AG04450 (cell line): ENCODE measurements at regions of chr4 and their contacts with region 1.

Region 1: GRCh38 chr4:123701131-123701575 is 304.6 kb downstream of the SPRY1 start:
- DNase-seq: no peak
- H3K4me3 ChIP-seq: no peak overlapping the region
- H3K27ac ChIP-seq: no peak overlapping the region
- H3K27me3 ChIP-seq: no peaks in the 10 kb centered on the region
- CTCF ChIP-seq: no peak

Region 2: DNA sequence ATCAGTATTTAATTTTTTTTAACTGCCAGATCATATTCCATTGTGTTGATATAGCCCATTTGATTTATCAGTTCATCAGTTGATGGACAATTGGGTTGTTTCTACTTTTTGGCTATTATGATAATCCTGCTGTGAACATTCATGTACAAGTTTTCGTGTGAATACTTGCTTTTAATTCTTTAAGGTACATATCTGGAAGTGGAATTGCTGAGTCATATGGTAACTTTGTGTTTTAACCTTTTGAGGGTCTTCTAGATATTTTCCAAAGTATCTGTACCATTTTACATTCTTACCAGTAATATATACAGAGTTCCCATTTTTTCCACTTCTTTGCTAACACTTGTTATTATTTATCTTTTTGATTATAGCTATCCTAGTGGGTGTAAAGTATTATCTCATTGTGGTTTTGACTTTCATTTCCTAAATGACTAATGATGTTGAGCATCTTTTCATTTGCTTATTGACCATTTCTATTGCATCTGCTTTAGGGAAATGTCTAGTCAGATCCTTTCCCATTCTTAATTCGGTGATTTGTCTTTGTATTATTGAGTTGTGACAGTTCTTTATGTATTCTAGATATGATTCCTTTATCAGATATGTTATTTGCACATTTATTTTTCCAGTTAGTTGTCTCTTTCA is 703.6 kb before region 1 on chr4:
- CTCF ChIA-PET with region 1: no interaction called
- POLR2A ChIA-PET with region 1: no interaction called
- DNase-seq: no peak
- H3K4me3 ChIP-seq: no peak overlapping the region
- H3K27ac ChIP-seq: no peak overlapping the region
- H3K27me3 ChIP-seq: no peaks in the 10 kb centered on the region
- CTCF ChIP-seq: no peak

Region 3: DNA sequence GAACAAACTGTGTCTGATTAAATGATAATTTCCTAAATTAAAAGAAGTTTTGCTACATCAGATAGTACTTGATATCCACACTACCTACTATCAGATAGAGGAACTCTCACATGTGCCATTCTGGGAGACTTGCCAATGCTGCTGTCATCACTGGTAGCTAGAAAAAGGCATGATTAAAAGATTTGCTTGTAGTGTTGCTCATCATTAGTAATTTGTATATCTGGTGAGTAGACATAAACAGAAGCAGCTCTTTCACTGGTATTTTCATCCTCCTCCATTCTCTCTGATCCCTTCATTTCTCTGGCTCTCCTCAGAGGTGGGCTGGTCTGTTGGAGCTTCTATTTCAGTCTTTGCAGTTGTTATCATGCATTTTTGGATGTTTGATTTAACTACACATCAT is 248.5 kb before region 1 on chr4:
- CTCF ChIA-PET with region 1: interaction called, 12 read pairs
- POLR2A ChIA-PET with region 1: no interaction called
- DNase-seq: peak; percentile 86
- H3K4me3 ChIP-seq: no peak overlapping the region
- H3K27ac ChIP-seq: no peak overlapping the region
- H3K27me3 ChIP-seq: no peaks in the 10 kb centered on the region
- CTCF ChIP-seq: no peak